Adrenal gland (tissue), 19 donors: ENCODE measurements at regions of chr22 and their contacts with region 1.

Region 1: DNA sequence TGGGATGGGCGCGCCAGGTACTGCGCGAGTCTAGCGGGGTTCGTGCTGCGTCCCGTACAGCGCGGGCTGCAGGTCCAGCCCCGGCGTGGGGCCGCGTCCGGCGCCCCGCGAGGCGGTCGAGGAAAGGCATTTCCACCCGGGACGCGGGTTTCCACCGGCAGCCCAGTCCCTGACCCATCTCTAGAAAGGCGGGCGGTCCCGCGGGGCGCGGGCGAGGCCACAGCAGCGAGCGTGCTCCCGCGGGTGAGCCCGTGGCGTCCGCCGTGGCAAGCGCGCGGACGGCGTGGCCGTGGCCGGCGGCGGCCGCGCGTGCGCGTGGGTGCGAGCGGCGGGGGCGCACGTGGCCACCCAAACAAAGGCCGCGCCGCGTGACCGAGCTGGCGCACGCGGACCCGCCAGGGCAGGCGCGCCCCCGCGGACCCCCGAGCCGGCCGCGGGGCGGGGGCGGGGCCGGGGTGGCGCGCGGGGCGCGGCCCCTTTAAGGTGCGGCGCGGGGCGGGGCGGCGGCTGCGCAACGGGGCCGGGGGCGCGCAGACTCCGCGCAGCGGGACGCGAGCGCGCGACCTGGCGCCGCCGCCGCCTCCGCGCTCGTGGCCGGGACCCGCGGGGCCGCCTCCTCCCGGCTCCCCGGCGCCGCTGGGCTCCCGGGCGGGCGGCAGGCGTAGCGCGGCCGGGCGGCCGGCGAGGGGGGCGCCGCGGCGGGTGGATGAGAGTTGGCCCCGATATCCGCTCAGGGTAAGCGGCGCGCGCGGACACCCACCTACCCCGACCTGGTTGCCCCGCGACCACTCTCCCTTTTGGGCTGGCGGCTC is 39.3 kb upstream of the CELSR1 start:
- DNase-seq: peak in 4 of 7 donors; percentile 38 to 64 (median 52)
- H3K4me3 ChIP-seq: peak overlapping the region in 1 of 4 donors; percentile 88
- H3K27ac ChIP-seq: peak overlapping the region in 3 of 5 donors; percentile 13 to 80 (median 73)
- H3K4me1 ChIP-seq: peaks cover 21 to 40% of the 10 kb centered on the region in 2 donors
- H3K27me3 ChIP-seq: no peaks in the 10 kb centered on the region
- CTCF ChIP-seq: no peak
- POLR2A ChIP-seq: peak in 1 of 2 donors; percentile 7

Region 2: DNA sequence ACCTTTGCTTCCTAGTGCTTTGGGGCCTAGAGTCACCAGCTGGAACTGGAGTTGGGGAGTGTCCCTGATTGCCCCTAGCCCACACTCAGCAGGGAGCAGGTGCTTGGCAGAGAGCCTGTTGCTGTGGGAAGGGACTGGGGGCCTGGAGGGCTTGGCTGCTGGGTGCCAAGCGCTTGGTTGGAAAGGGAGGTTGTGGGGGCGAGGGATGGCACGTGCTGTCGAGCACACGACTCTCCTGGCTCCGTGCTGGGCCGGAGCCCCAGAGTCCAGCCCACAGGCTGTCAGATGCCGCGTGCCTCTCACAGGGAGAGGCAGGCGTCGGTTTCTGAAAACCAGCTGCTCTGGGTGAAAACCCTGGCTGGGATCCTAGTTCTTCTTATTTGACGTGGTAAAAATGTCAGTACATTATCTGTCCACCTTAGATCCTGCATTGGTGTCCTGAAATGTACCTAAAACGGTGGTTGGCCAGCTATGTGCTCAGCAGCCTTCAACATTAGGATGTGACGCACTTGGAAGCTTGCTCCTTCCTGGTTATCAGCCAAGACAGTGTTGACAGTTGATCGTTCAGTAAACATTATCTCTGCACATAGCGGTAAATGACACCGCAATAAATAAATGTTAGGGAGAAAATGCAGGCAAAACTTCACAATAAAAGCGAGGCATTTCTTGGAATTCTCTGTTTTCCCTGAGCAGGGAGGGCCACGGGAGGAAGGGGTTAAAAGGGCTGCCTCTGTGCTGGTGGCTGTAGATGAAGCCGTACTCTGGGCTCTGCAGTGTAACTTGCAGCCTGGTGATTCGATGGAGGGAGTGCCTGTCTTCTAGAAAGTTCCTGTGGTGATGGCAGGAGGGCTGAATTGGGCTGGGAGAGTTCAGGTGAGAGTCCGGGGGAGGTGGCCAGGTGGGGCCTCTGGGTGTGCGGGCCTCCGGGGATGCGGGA is 72.6 kb after region 1 on chr22:
- intact Hi-C with region 1: loop called in 1 of 2 experiments (anchors 10 kb)
- DNase-seq: peak; percentile 53 to 94 (median 77)
- H3K4me3 ChIP-seq: no peak overlapping the region
- H3K27ac ChIP-seq: peak overlapping the region; percentile 64 to 90 (median 84)
- H3K4me1 ChIP-seq: peaks cover 18 to 39% of the 10 kb centered on the region in 2 donors
- H3K27me3 ChIP-seq: no peaks in the 10 kb centered on the region
- CTCF ChIP-seq: no peak
- POLR2A ChIP-seq: no peak

Region 3: GRCh38 chr22:46737976-46738646 is 161.3 kb after region 1 on chr22 and contains the start of gene CERK:
- intact Hi-C with region 1: loop called in 1 of 2 experiments (anchors 10 kb)
- DNase-seq: peak; percentile 78 to 91 (median 83)
- H3K4me3 ChIP-seq: peak within 1 kb of the TSS; percentile 27 to 86 (median 54)
- H3K27ac ChIP-seq: peak within 1 kb of the TSS; percentile 45 to 98 (median 81)
- H3K4me1 ChIP-seq: peaks cover 41 to 51% of the 10 kb centered on the region in 2 donors
- H3K27me3 ChIP-seq: no peaks in the 10 kb centered on the region
- CTCF ChIP-seq: no peak
- POLR2A ChIP-seq: peak in 1 of 2 donors; percentile 56
- total RNA-seq, gene CERK: 28.8 to 92.1 (median 45.6) TPM